Prostate gland (tissue), 2 donors: ENCODE measurements at regions of chr4 and their contacts with region 1.

Region 1: GRCh38 chr4:41260334-41260733 is 3.6 kb downstream of the UCHL1 start:
- DNase-seq: no peak
- H3K4me3 ChIP-seq: no peak overlapping the region
- H3K27ac ChIP-seq: no peak overlapping the region
- H3K4me1 ChIP-seq: no peaks in the 10 kb centered on the region
- H3K27me3 ChIP-seq: no peaks in the 10 kb centered on the region
- CTCF ChIP-seq: no peak
- POLR2A ChIP-seq: no peak

Region 2: GRCh38 chr4:41887821-41888686 is 627.7 kb after region 1 on chr4:
- intact Hi-C with region 1: loop called (anchors 5 kb)
- DNase-seq: no peak
- H3K4me3 ChIP-seq: no peak overlapping the region
- H3K27ac ChIP-seq: no peak overlapping the region
- H3K4me1 ChIP-seq: no peaks in the 10 kb centered on the region
- H3K27me3 ChIP-seq: no peaks in the 10 kb centered on the region
- CTCF ChIP-seq: peak; percentile 64 to 91 (median 76)
- POLR2A ChIP-seq: no peak